ENCODE measurements at regions of chr11 and their contacts with region 1.

Region 1: DNA sequence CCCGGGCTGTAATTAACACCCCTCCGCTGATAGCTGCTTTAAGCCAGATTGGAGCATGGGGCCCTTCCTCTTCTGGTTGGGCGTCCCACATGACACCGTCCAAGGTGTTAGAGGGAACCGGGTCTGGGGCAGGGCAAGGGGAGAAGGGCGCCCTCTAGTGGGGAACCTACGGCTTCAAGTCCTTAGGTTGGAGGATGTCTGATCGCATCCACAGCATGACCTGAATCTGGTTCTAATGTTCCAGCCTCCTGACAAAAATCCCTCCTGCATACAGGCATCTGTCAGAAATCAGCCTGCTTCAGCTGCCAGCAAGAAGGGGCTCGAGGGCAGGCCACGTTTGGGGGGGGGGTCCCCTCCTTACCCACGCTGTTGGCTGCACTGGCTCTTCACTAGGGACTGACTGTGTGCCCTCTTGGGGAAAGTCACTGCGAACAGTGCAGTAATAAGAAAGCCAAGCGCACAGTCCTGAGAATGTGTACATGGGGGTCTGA is 94.2 kb upstream of the TBCEL start:
- DNase-seq: peak; percentile 41
- H3K4me3 ChIP-seq: no peak overlapping the region
- H3K27ac ChIP-seq: no peak overlapping the region
- H3K4me1 ChIP-seq: no peaks in the 10 kb centered on the region
- H3K27me3 ChIP-seq: peaks cover 8% of the 10 kb centered on the region
- CTCF ChIP-seq: peak; percentile 26 to 60 (median 39)
- EP300 ChIP-seq: no peak
- POLR2A ChIP-seq: no peak

Region 2: GRCh38 chr11:121091492-121092152 is 161.9 kb after region 1 on chr11:
- in situ Hi-C with region 1: no loop called
- intact Hi-C with region 1: no loop called
- DNase-seq: no peak
- H3K4me3 ChIP-seq: no peak overlapping the region
- H3K27ac ChIP-seq: no peak overlapping the region
- H3K4me1 ChIP-seq: no peaks in the 10 kb centered on the region
- H3K27me3 ChIP-seq: no peaks in the 10 kb centered on the region
- CTCF ChIP-seq: no peak
- EP300 ChIP-seq: no peak
- POLR2A ChIP-seq: no peak

Region 3: DNA sequence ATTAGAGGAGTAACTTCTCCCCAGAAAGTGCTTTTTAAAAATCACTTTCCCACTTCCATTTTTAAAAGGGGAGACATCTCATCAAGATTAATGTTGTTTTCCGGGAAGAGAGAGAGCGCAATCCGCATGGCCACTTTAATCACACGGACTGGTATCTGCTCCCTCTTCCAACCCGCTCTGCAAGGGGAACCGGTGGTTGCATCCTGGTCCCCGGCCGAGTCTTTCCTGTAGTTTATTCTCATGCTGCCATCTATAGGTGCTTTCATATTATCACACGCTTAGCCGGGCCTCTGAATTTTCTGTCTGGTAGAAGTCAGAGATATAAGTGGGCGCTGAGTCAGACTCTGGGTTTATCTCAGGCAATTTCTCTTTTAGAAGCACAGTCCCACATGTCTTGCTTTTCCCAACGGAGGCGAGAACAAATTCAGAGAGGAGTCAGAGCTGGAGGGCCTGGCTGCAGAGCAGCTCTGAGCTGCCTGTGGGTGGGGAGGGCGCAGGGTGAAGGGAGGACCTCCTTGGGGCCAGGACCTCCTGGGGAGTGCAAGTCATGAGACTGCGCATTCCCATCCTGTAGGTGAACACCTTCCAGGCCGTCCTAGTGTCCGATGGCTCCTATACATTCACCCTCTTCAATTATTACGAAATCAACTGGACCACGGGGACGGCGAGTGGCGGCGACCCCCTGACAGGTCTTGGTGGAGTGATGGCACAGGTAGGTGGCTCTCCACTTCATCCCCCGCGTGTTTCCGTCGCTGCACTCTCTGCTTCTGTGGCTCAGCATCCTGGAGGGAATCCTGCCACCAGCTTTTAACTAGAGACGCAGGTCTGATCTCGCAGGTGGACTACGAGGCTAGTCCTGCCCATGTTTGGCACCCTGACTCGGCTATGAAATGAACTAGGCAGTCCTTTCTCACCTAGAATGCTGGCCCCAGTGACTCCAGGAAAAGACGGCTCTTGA is 183.1 kb after region 1 on chr11:
- in situ Hi-C with region 1: loop called in 1 of 4 experiments (anchors 25 kb)
- intact Hi-C with region 1: no loop called
- DNase-seq: peak; percentile 49
- H3K4me3 ChIP-seq: no peak overlapping the region
- H3K27ac ChIP-seq: no peak overlapping the region
- H3K4me1 ChIP-seq: no peaks in the 10 kb centered on the region
- H3K27me3 ChIP-seq: no peaks in the 10 kb centered on the region
- CTCF ChIP-seq: peak; percentile 49 to 56 (median 54)
- EP300 ChIP-seq: no peak
- POLR2A ChIP-seq: no peak